Panc1 (cell line): ENCODE measurements at regions of chr5 and their contacts with region 1.

Region 1: GRCh38 chr5:65961633-65962032 is 35.3 kb downstream of the ERBIN start:
- DNase-seq: no peak
- ATAC-seq: no peak
- H3K4me3 ChIP-seq: no peak overlapping the region
- H3K27ac ChIP-seq: no peak overlapping the region
- H3K4me1 ChIP-seq: peaks cover 7% of the 10 kb centered on the region; the same call in 1 of the 2 replicates
- H3K27me3 ChIP-seq: no peaks in the 10 kb centered on the region
- CTCF ChIP-seq: no peak

Region 2: GRCh38 chr5:65750938-65751337 is 210.7 kb before region 1 on chr5:
- CTCF ChIA-PET with region 1: no interaction called
- POLR2A ChIA-PET with region 1: interaction called, 16 read pairs
- in situ Hi-C with region 1: no loop called
- intact Hi-C with region 1: no loop called
- DNase-seq: no peak
- ATAC-seq: no peak
- H3K4me3 ChIP-seq: no peak overlapping the region
- H3K27ac ChIP-seq: no peak overlapping the region
- H3K4me1 ChIP-seq: no peaks in the 10 kb centered on the region
- H3K27me3 ChIP-seq: no peaks in the 10 kb centered on the region
- CTCF ChIP-seq: no peak

Region 3: GRCh38 chr5:65913519-65913918 is 48.1 kb before region 1 on chr5:
- CTCF ChIA-PET with region 1: no interaction called
- POLR2A ChIA-PET with region 1: no interaction called
- in situ Hi-C with region 1: no loop called
- intact Hi-C with region 1: no loop called
- DNase-seq: no peak
- ATAC-seq: no peak
- H3K4me3 ChIP-seq: no peak overlapping the region
- H3K27ac ChIP-seq: no peak overlapping the region
- H3K4me1 ChIP-seq: no peaks in the 10 kb centered on the region
- H3K27me3 ChIP-seq: no peaks in the 10 kb centered on the region
- CTCF ChIP-seq: no peak

Region 4: GRCh38 chr5:65986050-65986451 is 24.4 kb after region 1 on chr5:
- CTCF ChIA-PET with region 1: no interaction called
- POLR2A ChIA-PET with region 1: no interaction called
- in situ Hi-C with region 1: no loop called
- intact Hi-C with region 1: no loop called
- DNase-seq: no peak
- ATAC-seq: no peak
- H3K4me3 ChIP-seq: no peak overlapping the region
- H3K27ac ChIP-seq: no peak overlapping the region
- H3K4me1 ChIP-seq: peaks cover 24% of the 10 kb centered on the region
- H3K27me3 ChIP-seq: no peaks in the 10 kb centered on the region
- CTCF ChIP-seq: no peak

Region 5: DNA sequence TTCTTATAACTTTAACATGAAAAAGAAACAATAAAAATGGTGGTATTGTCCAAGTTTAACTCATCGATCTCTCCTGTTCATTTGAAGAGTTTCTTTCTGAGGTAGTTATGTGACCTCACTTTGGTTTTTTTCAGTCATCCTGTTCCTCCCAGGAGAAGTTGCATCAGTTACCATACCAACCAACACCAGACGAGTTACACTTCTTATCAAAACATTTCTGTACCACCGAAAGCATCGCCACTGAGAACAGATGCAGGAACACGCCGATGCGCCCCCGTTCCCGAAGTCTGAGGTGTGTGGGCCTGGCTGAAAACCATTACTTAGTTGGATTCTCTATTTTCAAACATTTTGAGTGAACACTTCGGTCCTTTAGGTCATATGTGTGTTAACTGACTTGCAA is 1138.7 kb after region 1 on chr5:
- CTCF ChIA-PET with region 1: no interaction called
- POLR2A ChIA-PET with region 1: no interaction called
- in situ Hi-C with region 1: no loop called
- intact Hi-C with region 1: no loop called
- DNase-seq: no peak
- ATAC-seq: no peak
- H3K4me3 ChIP-seq: no peak overlapping the region
- H3K27ac ChIP-seq: no peak overlapping the region
- H3K4me1 ChIP-seq: no peaks in the 10 kb centered on the region
- H3K27me3 ChIP-seq: no peaks in the 10 kb centered on the region
- CTCF ChIP-seq: no peak